Activated CD4-positive, alpha-beta T cell treated with anti-CD3 and anti-CD28 coated beads, Interleukin-2, amount 10 ng/mL, durations not matched to agents 24 days and 14 days (primary cell): ENCODE measurements at regions of chr5 and their contacts with region 1.

Region 1: DNA sequence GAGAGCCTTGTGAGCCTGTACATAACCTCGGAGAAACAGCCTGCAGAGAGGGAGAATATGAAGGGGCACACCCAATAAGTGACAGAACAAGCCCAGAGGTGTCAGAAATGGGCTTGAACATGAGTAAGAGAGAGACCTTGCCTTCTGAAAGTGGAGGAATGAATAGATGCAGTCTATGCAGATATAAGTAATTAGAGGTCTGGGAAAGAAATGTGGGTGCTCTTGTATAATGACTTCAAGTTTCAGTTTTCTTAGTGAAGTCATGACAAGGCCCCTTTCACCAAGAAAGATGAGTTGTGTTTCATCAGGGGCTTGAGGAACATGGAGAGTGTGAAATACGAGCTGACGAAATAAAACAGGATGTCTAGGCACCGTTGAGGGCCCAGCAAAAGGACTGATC is 15.1 kb downstream of the GRAMD2B start:
- DNase-seq: no peak
- H3K4me3 Mint-ChIP-seq: no peak overlapping the region
- H3K27ac Mint-ChIP-seq: peak overlapping the region; percentile 54
- H3K4me1 Mint-ChIP-seq: peaks cover 17% of the 10 kb centered on the region
- H3K27me3 Mint-ChIP-seq: no peaks in the 10 kb centered on the region

Region 2: DNA sequence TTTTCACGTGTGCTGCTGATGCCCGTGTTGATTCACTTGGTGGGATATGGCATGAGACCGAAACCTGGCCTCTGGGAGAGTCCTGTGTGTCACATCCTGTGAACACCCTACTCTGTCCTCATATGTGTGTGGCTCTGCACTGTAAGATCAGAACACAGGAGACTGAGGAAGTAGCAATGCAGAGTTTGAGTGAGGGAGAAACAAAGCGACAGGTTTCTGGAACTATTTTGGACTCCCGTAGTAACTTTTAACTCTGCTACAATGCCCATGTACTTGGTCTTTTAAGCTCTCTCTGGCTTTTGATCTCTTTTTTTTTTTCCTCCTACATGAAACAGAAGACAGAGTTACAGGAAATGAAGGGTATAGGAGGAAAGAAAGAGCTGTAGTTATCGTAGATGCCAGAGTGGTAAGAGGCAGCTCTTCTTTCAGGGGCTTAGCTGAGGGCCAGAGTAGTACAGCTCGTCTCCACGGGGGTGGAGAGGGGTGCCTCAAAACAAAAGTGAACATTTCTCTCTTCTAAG is 11.5 kb after region 1 on chr5:
- intact Hi-C with region 1: loop called (anchors 1 kb)
- DNase-seq: peak; percentile 88
- H3K4me3 Mint-ChIP-seq: peak overlapping the region; percentile 91
- H3K27ac Mint-ChIP-seq: peak overlapping the region; percentile 100
- H3K4me1 Mint-ChIP-seq: peaks cover 57% of the 10 kb centered on the region
- H3K27me3 Mint-ChIP-seq: no peaks in the 10 kb centered on the region